PC-9 (cell line): ENCODE measurements at regions of chr20 and their contacts with region 1.

Region 1: GRCh38 chr20:64062596-64063388 is at the start of gene TCEA2:
- DNase-seq: peak; percentile 87 to 97
- H3K4me3 ChIP-seq: peak within 1 kb of the TSS; percentile 90
- H3K27ac ChIP-seq: peak within 1 kb of the TSS; percentile 61
- H3K4me1 ChIP-seq: peaks cover 54% of the 10 kb centered on the region
- H3K27me3 ChIP-seq: no peaks in the 10 kb centered on the region
- CTCF ChIP-seq: no peak
- total RNA-seq, gene TCEA2: 100 and 156 TPM in 2 replicates

Region 2: DNA sequence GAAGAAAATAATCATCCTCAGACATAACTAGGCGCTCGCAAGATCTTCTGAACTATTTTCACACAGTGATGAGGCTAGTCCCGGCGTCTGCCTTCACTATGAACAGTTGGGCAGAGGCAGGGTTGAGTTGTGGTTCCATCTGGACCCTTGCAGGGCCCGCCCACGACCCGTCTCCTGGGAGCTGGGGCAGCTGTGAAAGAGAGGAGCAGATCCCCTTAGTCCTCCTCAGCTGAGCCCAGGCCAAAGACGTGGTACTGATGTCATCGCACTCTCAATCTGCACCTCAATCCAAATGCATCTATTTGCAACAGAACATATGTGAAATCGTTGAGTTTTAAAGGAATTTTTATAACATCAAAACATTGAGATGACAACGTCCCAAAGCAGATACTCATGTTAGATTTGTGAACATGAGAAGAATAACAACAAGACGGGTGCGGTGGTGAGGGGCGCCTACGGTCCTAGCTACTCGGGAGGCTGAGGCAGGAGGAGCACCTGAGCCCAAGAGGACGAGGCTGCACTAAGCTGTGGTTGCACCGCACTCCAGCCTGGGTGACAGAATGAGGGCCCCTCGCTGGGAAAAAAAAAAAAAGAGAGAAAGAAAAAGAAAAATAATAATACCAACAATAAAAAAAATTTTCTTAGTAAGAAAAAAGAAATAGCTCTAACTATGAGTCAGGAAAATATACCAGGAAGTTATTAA is 1216.5 kb before region 1 on chr20:
- CTCF ChIA-PET with region 1: no interaction called
- POLR2A ChIA-PET with region 1: no interaction called
- intact Hi-C with region 1: no loop called
- DNase-seq: peak in 1 of 2 experiments; percentile 26
- H3K4me3 ChIP-seq: no peak overlapping the region
- H3K27ac ChIP-seq: no peak overlapping the region
- H3K4me1 ChIP-seq: no peaks in the 10 kb centered on the region
- H3K27me3 ChIP-seq: no peaks in the 10 kb centered on the region
- CTCF ChIP-seq: no peak

Region 3: GRCh38 chr20:63574156-63574828 is 488.5 kb before region 1 on chr20 and contains the start of gene HELZ2:
- CTCF ChIA-PET with region 1: no interaction called
- POLR2A ChIA-PET with region 1: interaction called, 18 read pairs
- intact Hi-C with region 1: no loop called
- DNase-seq: peak in 1 of 2 experiments; percentile 67
- H3K4me3 ChIP-seq: peak within 1 kb of the TSS; percentile 60
- H3K27ac ChIP-seq: no peak within 1 kb of the TSS
- H3K4me1 ChIP-seq: peaks cover 11% of the 10 kb centered on the region
- H3K27me3 ChIP-seq: no peaks in the 10 kb centered on the region
- CTCF ChIP-seq: no peak
- total RNA-seq, gene HELZ2: 33.7 and 52.6 TPM in 2 replicates

Region 4: DNA sequence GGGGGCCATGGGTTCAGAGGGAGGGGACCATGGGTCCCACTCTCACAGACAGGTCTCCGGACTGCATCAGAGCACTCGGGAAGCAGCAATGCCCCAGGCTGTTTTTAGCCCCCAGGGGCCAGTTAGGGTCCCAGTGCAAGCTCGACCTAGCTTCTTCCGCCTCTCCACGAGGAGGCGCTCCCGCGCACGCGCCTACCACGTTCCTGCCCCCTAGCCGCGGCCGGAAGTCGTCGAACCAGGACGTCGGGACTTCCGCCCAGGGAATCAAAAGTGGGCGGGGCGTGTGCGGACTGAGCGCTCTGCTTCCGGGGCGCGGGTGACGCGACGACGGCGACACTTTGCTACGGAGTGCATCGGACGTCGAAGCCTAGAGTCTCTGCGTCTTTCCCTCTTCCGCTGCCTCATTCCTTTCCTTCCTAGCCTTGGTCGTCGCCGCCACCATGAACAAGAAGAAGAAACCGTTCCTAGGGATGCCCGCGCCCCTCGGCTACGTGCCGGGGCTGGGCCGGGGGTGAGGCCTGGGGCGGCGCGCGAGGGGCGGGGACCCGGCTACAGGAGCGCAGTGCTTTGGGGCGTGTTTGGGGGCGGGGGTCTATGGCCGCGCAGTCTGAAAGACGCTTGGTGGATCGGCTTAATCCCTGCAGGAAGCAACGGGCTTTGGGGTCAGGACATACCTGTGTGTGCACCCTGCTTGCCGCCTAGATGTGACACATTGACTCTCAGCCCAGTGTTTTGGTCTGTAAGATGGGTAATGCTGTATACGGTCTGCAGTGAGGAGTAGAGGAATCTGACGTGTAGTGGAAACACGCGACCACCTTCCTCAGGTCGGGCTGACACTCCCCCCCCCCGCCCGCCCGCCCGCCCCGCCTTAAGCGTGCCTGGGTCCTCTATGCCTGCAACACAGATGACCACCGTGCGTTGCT is 81.7 kb before region 1 on chr20 and contains the start of gene PRPF6:
- CTCF ChIA-PET with region 1: interaction called, 3 read pairs
- POLR2A ChIA-PET with region 1: interaction called, 3 read pairs
- intact Hi-C with region 1: loop called (anchors 1 kb)
- DNase-seq: peak; percentile 90 to 96
- H3K4me3 ChIP-seq: peak within 1 kb of the TSS; percentile 99
- H3K27ac ChIP-seq: peak within 1 kb of the TSS; percentile 62
- H3K4me1 ChIP-seq: peaks cover 17% of the 10 kb centered on the region
- H3K27me3 ChIP-seq: no peaks in the 10 kb centered on the region
- CTCF ChIP-seq: peak; percentile 78
- total RNA-seq, gene PRPF6: 103 and 111 TPM in 2 replicates

Region 5: DNA sequence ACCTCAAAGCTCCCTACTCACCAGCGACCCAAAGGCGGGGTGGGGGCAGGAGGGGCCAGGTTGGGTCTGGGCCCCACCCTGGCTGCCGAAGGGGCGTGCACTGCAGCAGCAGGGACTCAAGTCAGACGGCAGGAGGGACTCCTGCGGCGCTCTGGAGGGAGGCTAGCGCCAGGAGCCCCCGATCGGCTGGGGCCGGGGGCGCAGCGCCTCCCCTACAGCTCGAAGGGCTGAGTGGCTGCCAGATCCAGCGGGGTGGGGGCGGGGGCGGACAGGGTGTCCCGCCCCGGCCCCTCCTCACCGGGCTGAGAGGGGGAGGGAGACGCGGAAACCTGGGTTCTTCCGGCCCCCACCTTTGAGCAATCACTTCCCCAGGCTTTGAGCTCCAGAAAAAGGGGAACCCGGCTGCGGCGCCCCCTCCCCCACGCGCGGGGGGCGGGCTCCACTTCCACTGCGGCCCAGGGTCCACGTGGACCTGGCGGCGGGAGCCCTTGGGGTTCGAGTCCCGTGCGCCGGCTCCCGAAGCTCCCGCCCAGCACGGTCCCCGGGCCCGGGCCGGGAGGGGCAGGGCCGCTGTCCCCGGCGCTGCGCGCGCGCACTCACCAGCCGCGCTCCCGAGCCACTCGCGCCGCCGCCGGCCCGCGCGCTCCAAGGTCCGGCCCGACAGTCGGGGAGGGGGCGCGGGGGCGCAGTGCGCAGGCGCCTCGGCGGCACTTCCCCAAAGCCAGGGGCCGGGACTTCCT is 16.7 kb after region 1 on chr20 and contains the start of gene RGS19:
- CTCF ChIA-PET with region 1: no interaction called
- POLR2A ChIA-PET with region 1: no interaction called
- intact Hi-C with region 1: loop called (anchors 1 kb)
- DNase-seq: peak in 1 of 2 experiments; percentile 88
- H3K4me3 ChIP-seq: peak within 1 kb of the TSS; percentile 94
- H3K27ac ChIP-seq: no peak within 1 kb of the TSS
- H3K4me1 ChIP-seq: peaks cover 14% of the 10 kb centered on the region
- H3K27me3 ChIP-seq: peaks cover 20% of the 10 kb centered on the region
- CTCF ChIP-seq: no peak
- total RNA-seq, gene RGS19: 33.3 and 39.2 TPM in 2 replicates

Region 6: GRCh38 chr20:64113444-64113775 is 50.6 kb after region 1 on chr20:
- CTCF ChIA-PET with region 1: no interaction called
- POLR2A ChIA-PET with region 1: no interaction called
- intact Hi-C with region 1: no loop called
- DNase-seq: no peak
- H3K4me3 ChIP-seq: no peak overlapping the region
- H3K27ac ChIP-seq: no peak overlapping the region
- H3K4me1 ChIP-seq: no peaks in the 10 kb centered on the region
- H3K27me3 ChIP-seq: peaks cover 74% of the 10 kb centered on the region
- CTCF ChIP-seq: no peak